Ascending aorta (tissue), 2 donors: ENCODE measurements at regions of chr4 and their contacts with region 1.

Region 1: DNA sequence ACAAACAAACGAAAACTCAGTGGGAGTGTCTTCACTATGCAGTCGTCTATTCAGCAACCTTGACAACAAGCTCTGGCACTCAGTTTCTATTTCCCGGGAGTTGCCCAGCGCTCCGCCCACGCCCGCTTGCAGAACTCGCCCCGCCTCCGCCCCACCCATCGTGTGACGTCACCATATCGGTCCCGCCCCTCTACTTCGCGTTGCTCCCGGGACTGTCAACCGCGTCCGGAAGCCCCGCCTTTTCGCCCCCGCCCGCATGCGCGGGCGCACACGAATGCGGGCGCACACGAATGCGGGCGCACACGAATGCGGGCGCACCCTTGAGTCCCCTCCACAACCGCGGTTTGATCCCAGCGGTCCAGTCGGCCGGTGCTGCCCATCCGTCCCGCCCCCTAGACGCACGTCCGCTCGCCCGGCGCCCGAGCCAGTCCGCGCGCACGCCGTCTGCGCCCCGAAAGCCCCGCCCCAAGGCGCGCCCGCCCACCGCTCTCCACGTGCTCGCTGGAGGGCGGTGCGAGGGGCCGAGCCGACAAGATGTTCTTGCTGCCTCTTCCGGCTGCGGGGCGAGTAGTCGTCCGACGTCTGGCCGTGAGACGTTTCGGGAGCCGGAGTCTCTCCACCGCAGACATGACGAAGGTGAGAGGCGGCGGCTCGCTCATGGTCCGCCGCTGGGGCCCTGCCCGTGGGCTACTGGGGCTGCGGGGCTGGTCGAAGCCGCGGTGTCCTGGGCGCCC is at the start of gene LAP3:
- DNase-seq: peak; percentile 87 to 99
- H3K4me3 ChIP-seq: peak within 1 kb of the TSS; percentile 86 to 96
- H3K27ac ChIP-seq: peak within 1 kb of the TSS; percentile 96 to 97
- H3K4me1 ChIP-seq: peaks cover 7 to 17% of the 10 kb centered on the region in 2 donors
- H3K27me3 ChIP-seq: no peaks in the 10 kb centered on the region
- CTCF ChIP-seq: no peak
- total RNA-seq, gene LAP3: 60.3 TPM

Region 2: DNA sequence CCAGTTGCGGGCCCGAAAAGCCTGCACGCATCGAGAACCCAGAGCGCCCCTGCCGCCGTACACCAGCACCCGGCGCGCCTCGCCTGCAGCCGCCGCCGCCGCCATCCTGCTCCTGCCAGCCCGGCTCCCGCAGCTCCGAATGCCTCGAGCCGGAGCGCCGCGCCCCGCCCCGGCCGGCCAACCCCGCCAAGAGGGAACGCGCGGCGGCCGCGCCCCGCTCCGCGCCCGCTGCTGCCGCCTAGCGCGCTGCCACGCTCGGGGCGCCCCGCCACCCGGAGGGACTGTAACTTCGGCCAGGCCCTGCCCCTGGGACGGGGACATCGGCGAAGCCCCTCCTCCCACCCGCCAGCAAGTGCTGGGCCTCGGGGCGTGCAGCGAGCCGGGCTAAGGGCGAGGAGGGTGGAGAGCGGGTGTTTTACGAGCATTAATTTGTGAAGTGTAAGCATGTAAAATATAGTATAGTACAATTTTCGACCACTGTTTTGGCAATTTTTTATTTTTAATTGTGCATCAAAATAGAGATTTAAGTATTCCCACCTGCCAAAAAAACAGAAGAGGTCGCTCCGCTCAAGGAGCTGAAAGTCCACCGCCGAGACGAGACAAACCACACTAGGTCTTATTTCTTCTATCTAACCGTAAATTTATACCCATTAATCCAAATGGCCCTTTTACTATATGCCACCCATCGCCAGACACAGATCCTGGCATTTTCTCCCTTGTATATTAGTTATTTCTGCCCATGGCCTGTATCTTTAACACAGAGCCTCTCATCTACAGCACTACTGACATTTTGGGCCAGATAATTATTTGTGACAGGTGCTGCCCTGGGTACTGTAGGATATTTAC is 64.9 kb before region 1 on chr4 and contains the start of gene QDPR:
- intact Hi-C with region 1: loop called (anchors 2 kb)
- DNase-seq: peak; percentile 37 to 89
- H3K4me3 ChIP-seq: peak within 1 kb of the TSS; percentile 75 to 100
- H3K27ac ChIP-seq: peak within 1 kb of the TSS; percentile 65 to 80
- H3K4me1 ChIP-seq: peaks cover 3 to 16% of the 10 kb centered on the region in 2 donors
- H3K27me3 ChIP-seq: no peaks in the 10 kb centered on the region
- CTCF ChIP-seq: peak; percentile 17 to 44 (median 34)
- total RNA-seq, gene QDPR: 32.7 TPM

Region 3: DNA sequence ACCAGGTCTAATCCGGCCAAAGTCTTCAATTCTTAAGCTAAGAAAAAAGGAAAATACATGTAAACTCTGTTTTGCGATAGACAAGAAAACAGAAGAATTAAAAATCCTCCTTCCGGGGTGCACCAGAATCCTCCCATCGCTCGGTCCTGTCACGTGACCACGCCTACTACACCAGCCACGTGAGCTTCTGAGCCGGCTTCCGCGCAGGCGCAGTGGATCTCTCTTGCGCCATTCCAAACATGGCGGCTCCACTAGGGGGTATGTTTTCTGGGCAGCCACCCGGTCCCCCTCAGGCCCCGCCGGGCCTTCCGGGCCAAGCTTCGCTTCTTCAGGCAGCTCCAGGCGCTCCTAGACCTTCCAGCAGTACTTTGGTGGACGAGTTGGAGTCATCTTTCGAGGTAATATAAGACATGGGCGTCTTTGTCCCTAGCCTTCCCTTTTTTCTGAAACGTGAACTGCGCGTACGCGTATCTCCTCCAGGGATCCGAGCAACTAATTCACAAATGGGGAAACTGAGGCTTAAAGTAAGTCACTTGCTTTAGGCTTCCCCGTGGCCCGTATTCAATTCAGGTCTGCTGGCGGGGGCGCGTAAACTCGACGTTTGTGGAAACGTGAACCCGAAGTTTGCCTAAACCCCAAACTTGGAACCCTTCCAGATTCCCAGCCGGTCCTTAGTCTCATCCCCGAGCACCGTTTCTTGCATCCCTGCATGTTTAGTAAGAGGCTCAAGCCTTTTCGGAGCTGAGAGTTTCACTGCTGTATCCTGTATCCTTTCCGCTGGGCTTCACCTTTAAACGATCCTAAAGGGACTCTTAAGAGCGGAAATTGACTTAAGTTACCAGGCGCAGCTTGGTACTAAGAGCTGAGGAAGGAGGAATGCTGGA is 37.6 kb after region 1 on chr4 and contains the start of gene MED28:
- intact Hi-C with region 1: loop called (anchors 1 kb)
- DNase-seq: peak; percentile 88 to 98
- H3K4me3 ChIP-seq: peak within 1 kb of the TSS; percentile 80 to 91
- H3K27ac ChIP-seq: peak within 1 kb of the TSS; percentile 80 to 81
- H3K4me1 ChIP-seq: peaks cover 4 to 21% of the 10 kb centered on the region in 2 donors
- H3K27me3 ChIP-seq: no peaks in the 10 kb centered on the region
- CTCF ChIP-seq: peak in 1 of 3 experiments; percentile 21
- total RNA-seq, gene MED28: 6.2 TPM

Region 4: GRCh38 chr4:18021722-18022571 is 444.8 kb after region 1 on chr4 and contains the start of gene LCORL:
- intact Hi-C with region 1: loop called (anchors 1 kb)
- DNase-seq: peak; percentile 77 to 97
- H3K4me3 ChIP-seq: peak within 1 kb of the TSS; percentile 89 to 100
- H3K27ac ChIP-seq: peak within 1 kb of the TSS; percentile 83 to 91
- H3K4me1 ChIP-seq: peaks cover 2 to 3% of the 10 kb centered on the region in 2 donors
- H3K27me3 ChIP-seq: no peaks in the 10 kb centered on the region
- CTCF ChIP-seq: no peak
- total RNA-seq, gene LCORL: 1.4 TPM